ENCODE measurements at regions of chr19 and their contacts with region 1.

Region 1: GRCh38 chr19:37987356-37988332 is 80.6 kb downstream of the SIPA1L3 start:
- DNase-seq: peak in 1 of 2 experiments; percentile 53
- ATAC-seq: peak in 1 of 2 experiments; percentile 55; a peak in 3 of 6 replicates
- H3K4me3 ChIP-seq: no peak overlapping the region
- H3K27ac ChIP-seq: peak overlapping the region in 1 of 2 experiments; percentile 40; a peak in 3 of 6 replicates
- H3K4me1 ChIP-seq: peaks cover 44% of the 10 kb centered on the region
- CTCF ChIP-seq: peak; percentile 57
- EP300 ChIP-seq: no peak
- POLR2A ChIP-seq: no peak
- RAD21 ChIP-seq: peak; percentile 47 to 62

Region 2: DNA sequence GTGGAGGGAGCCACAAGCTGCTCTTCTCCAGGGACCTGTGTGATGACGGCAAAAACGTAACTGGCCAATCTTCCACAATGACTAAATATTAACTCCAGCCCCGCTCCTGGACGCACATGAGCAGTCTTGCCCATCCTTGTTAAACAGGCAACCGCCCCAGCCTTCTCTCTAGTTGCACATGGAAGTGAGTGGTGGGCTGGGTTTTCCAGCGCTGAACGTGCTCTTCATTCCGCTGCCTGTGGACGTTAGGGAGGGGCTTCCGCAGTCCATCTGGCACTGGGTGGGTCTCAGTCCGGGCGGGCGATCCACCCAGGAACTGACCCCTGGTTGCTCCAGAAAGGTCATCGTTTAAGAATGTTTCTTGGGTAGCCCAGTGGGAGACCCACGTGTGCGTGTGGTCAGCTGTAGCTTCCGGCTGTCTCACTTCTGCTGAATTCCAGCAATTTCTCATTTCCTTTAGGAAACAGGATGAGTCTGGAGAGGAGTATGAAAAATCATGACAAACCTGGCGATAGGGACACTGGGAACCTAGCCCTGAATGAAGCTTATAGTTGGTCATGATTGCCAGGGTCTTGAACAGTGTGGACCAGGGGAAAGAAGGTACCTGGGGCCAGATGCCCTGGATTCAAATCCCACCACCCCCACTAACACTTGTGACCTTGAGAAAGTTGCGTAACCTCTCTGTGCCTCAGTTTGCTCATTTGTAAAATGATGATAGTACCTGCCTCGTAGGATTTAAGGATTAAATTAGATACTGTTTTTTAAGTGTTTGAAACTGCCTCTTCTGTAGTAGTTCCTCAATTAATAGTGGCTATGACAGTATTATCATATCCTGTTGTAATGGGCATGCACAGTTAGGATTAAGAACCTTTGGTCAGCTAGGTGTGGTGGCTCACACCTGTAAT is 11.9 kb after region 1 on chr19:
- CTCF ChIA-PET with region 1: interaction called, 14 read pairs
- POLR2A ChIA-PET with region 1: interaction called, 6 read pairs
- DNase-seq: peak; percentile 94 to 97
- ATAC-seq: peak; percentile 87
- H3K4me3 ChIP-seq: 0 out of 3 replicates have a peak overlapping the region, but pooled peaks have one; percentile 0
- H3K27ac ChIP-seq: peak overlapping the region; percentile 76 to 87
- H3K4me1 ChIP-seq: peaks cover 57% of the 10 kb centered on the region
- CTCF ChIP-seq: no peak
- EP300 ChIP-seq: peak; percentile 82 to 94; a peak in 3 of 5 replicates
- POLR2A ChIP-seq: no peak
- RAD21 ChIP-seq: peak; percentile 4 to 53; a peak in 4 of 5 replicates

Region 3: GRCh38 chr19:38004521-38005223 is 17.0 kb after region 1 on chr19:
- CTCF ChIA-PET with region 1: interaction called, 14 read pairs
- POLR2A ChIA-PET with region 1: no interaction called
- DNase-seq: peak; percentile 90 to 91
- ATAC-seq: peak; percentile 83 to 89
- H3K4me3 ChIP-seq: no peak overlapping the region
- H3K27ac ChIP-seq: peak overlapping the region; percentile 30 to 61
- H3K4me1 ChIP-seq: peaks cover 40% of the 10 kb centered on the region
- CTCF ChIP-seq: no peak
- EP300 ChIP-seq: no peak
- POLR2A ChIP-seq: no peak
- RAD21 ChIP-seq: no peak

Measured in A549 (cell line).